Dendritic cell treated with granulocyte-macrophage colony-stimulating factor and Interleukin-4, amounts not matched to agents 40 ng/mL and 50 ng/mL, for 4 days (primary cell): ENCODE measurements at regions of chr18 and their contacts with region 1.

Region 1: DNA sequence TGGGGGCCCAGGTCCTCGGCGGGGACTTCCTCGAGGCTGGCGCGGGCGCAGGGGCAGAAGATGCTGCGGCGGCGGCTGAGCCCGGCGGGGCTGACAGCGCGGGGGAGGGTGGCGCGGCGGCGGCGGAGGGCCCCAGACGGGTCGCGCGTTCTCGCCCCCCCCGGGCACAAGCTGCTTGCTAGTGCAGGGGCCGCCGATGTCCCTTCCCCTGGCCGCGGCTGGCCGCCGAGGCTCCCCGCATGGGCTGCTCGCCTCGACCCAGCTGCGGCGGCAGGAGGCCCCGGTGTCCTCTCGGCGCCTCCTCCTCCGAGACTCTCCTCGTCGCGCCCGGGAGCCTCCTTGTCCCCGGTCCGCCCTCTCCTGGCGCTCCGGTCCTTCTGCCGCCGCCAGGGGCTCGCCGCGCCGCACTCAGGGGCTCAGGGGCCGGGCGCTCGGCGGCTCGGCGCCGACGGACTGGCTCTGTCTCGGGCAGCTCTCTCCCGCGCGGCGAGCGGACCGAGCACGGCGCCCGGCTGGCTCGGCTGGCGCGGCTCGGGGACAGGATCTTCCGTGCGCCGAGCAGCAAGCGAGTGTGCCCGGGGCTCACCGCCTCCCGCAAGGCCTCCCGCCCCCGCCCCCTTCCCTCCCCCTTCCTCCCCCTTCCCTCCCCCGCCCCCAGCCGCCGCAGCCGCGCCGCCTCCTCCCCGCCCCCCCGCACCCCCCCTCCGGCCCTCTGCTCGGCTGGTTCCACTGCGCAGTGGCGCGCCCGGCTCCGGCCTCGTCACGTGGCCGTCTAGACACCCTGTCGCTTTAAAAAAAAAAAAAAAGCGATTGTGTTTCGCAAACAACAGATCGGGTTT is 902 bp upstream of the SMAD7 start:
- H3K4me3 Mint-ChIP-seq: peak overlapping the region; percentile 94
- H3K27ac Mint-ChIP-seq: peak overlapping the region; percentile 99
- H3K4me1 Mint-ChIP-seq: peaks cover 32% of the 10 kb centered on the region
- H3K27me3 Mint-ChIP-seq: peaks cover 4% of the 10 kb centered on the region

Region 2: DNA sequence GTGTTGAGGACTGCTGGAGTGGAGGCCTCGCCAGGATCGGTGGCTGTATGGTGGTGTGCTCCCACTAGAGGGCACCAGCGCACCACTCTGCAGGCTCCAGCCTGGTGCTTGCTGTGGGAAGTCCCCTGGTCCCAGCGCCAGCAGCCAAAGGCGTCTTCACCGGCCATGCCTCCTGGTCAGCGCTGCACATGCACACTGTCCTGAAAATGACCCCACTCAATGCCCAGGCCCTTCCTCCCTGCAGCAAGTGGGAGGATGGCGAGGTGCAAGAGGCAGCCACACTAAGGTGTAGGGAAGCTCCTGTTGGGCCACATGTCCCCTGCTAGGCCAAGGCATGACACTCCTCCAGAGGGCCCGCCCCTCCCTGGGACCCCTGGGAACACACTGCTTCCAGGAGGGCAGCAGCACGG is 276.3 kb before region 1 on chr18:
- intact Hi-C with region 1: loop called (anchors 10 kb)
- H3K4me3 Mint-ChIP-seq: no peak overlapping the region
- H3K27ac Mint-ChIP-seq: no peak overlapping the region
- H3K4me1 Mint-ChIP-seq: peaks cover 54% of the 10 kb centered on the region
- H3K27me3 Mint-ChIP-seq: no peaks in the 10 kb centered on the region

Region 3: GRCh38 chr18:48777026-48777743 is 174.5 kb before region 1 on chr18:
- intact Hi-C with region 1: loop called (anchors 5 kb)
- H3K4me3 Mint-ChIP-seq: no peak overlapping the region
- H3K27ac Mint-ChIP-seq: no peak overlapping the region
- H3K4me1 Mint-ChIP-seq: peaks cover 71% of the 10 kb centered on the region
- H3K27me3 Mint-ChIP-seq: peaks cover 3% of the 10 kb centered on the region

Region 4: DNA sequence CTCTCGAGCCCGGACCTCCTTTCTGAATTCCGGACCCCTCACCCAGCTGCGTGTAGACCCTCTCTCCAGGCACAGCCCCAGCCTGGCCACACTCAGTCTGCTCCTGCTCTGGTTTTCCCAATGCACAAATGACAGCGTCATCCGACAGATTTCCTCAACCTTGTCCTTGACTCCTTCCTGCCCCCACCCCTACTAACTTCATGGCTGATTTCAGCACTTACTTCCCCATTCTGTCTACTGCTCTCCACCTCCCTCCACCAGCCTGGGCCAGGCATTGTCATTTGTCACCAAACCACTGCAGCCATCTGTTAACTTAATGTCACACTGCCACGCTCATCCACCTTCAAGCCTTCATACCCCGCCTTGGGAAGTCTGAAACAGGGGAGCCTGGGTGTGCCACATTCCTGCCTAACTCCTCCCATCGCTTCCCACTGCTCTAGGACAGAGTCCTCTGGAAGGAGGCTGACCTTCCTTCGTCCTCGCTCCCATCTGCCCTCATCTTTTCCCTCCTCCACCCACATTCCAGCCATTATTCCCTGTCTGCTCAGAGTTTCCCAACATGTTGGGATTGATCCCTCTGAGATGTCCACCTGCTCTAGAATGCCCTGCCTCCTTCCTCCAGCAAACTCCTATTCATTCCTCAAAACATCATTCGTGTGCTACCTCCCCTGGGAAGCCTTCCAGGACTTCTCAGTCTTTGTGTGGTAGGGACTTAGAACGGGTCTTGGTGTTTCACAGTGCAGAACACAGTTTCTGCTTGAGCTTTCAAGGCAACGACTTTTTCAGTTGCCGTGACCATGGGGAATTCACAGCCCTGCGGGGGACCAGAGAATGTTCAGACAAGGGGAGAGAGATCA is 41.3 kb after region 1 on chr18:
- intact Hi-C with region 1: loop called (anchors 5 kb)
- H3K4me3 Mint-ChIP-seq: peak overlapping the region; percentile 30
- H3K27ac Mint-ChIP-seq: peak overlapping the region; percentile 92
- H3K4me1 Mint-ChIP-seq: peaks cover 81% of the 10 kb centered on the region
- H3K27me3 Mint-ChIP-seq: no peaks in the 10 kb centered on the region

Region 5: GRCh38 chr18:49016631-49017539 is 65.2 kb after region 1 on chr18:
- intact Hi-C with region 1: no loop called
- H3K4me3 Mint-ChIP-seq: no peak overlapping the region
- H3K27ac Mint-ChIP-seq: no peak overlapping the region
- H3K4me1 Mint-ChIP-seq: no peaks in the 10 kb centered on the region
- H3K27me3 Mint-ChIP-seq: peaks cover 4% of the 10 kb centered on the region

Region 6: GRCh38 chr18:49123431-49123830 is 171.8 kb after region 1 on chr18:
- intact Hi-C with region 1: no loop called
- H3K4me3 Mint-ChIP-seq: no peak overlapping the region
- H3K27ac Mint-ChIP-seq: no peak overlapping the region
- H3K4me1 Mint-ChIP-seq: no peaks in the 10 kb centered on the region
- H3K27me3 Mint-ChIP-seq: no peaks in the 10 kb centered on the region

Region 7: GRCh38 chr18:49250816-49251388 is 299.2 kb after region 1 on chr18:
- intact Hi-C with region 1: loop called (anchors 10 kb)
- H3K4me3 Mint-ChIP-seq: no peak overlapping the region
- H3K27ac Mint-ChIP-seq: peak overlapping the region; percentile 7
- H3K4me1 Mint-ChIP-seq: peaks cover 22% of the 10 kb centered on the region
- H3K27me3 Mint-ChIP-seq: no peaks in the 10 kb centered on the region